Tibial artery (tissue), 4 donors: ENCODE measurements at regions of chr5 and their contacts with region 1.

Region 1: GRCh38 chr5:14644623-14645237 is 19.8 kb upstream of the OTULIN start:
- DNase-seq: no peak
- H3K4me3 ChIP-seq: no peak overlapping the region
- H3K27ac ChIP-seq: no peak overlapping the region
- H3K4me1 ChIP-seq: no peaks in the 10 kb centered on the region
- H3K27me3 ChIP-seq: peaks cover 0 to 22% of the 10 kb centered on the region in 2 donors
- CTCF ChIP-seq: no peak

Region 2: GRCh38 chr5:13987843-13988464 is 656.8 kb before region 1 on chr5:
- intact Hi-C with region 1: loop called (anchors 10 kb)
- DNase-seq: peak in 1 of 2 donors; percentile 43
- H3K4me3 ChIP-seq: no peak overlapping the region
- H3K27ac ChIP-seq: no peak overlapping the region
- H3K4me1 ChIP-seq: peaks cover 0 to 10% (median 0%) of the 10 kb centered on the region in 4 donors
- H3K27me3 ChIP-seq: peaks cover 0 to 3% of the 10 kb centered on the region in 2 donors
- CTCF ChIP-seq: peak; percentile 77 to 82

Region 3: GRCh38 chr5:14351845-14352712 is 292.7 kb before region 1 on chr5:
- intact Hi-C with region 1: loop called (anchors 5 kb)
- DNase-seq: peak; percentile 58 to 81
- H3K4me3 ChIP-seq: no peak overlapping the region
- H3K27ac ChIP-seq: no peak overlapping the region
- H3K4me1 ChIP-seq: peaks cover 0 to 25% (median 5%) of the 10 kb centered on the region in 4 donors
- H3K27me3 ChIP-seq: no peaks in the 10 kb centered on the region
- CTCF ChIP-seq: peak; percentile 85 to 95

Region 4: GRCh38 chr5:14405267-14405666 is 239.5 kb before region 1 on chr5:
- intact Hi-C with region 1: loop called (anchors 10 kb)
- DNase-seq: no peak
- H3K4me3 ChIP-seq: no peak overlapping the region
- H3K27ac ChIP-seq: no peak overlapping the region
- H3K4me1 ChIP-seq: peaks cover 0 to under 1% (median 0%) of the 10 kb centered on the region in 4 donors
- H3K27me3 ChIP-seq: no peaks in the 10 kb centered on the region
- CTCF ChIP-seq: no peak

Region 5: GRCh38 chr5:14871210-14872069 is 226.7 kb after region 1 on chr5 and contains the start of gene ANKH:
- intact Hi-C with region 1: no loop called
- DNase-seq: peak; percentile 69 to 89
- H3K4me3 ChIP-seq: peak within 1 kb of the TSS; percentile 78 to 99
- H3K27ac ChIP-seq: peak within 1 kb of the TSS; percentile 96 to 98
- H3K4me1 ChIP-seq: peaks cover 0 to 27% (median 10%) of the 10 kb centered on the region in 4 donors
- H3K27me3 ChIP-seq: no peaks in the 10 kb centered on the region
- CTCF ChIP-seq: peak in 1 of 2 experiments; percentile 57

Region 6: DNA sequence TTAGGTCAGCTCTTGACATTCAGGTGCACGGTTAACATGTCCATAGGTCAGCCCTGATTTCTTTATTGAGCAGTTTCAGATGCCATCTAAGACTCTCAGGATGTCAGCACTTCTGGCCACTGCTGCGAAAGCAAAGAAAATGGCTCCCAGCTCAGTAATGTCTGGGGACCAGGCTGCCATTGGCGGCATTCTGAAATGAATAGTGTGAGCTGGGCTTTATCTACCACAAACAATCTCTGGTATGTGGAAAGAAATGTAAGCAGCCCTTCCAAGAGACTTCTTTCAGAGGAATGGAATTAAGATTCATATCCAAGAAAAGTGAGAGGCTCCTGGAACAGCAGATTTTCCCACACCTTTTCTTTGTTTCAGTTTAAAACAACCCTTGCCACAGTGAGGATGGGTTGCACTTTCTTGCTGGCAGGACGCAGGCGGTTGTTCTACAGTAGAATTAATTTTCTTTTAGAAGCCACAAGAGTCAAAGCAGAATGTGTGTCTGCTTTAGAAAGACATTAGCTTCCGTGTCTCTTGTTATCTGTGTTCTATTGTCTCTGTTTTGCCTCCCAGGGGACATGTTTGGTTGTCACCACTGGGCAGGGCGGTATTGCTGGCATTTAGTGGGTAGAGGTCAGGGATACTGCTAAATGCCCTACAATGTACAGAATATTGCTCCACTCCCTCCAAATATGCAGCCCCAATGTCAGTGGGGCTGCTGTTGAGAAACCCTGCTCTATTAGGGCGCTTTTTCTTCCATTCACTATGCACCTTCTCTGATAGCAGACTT is 376.7 kb after region 1 on chr5:
- intact Hi-C with region 1: no loop called
- DNase-seq: no peak
- H3K4me3 ChIP-seq: peak overlapping the region; percentile 26 to 30
- H3K27ac ChIP-seq: peak overlapping the region; percentile 54 to 67
- H3K4me1 ChIP-seq: peaks cover 0 to 43% (median 9%) of the 10 kb centered on the region in 4 donors
- H3K27me3 ChIP-seq: no peaks in the 10 kb centered on the region
- CTCF ChIP-seq: no peak

Region 7: GRCh38 chr5:15785531-15785981 is 1140.8 kb after region 1 on chr5:
- intact Hi-C with region 1: no loop called
- DNase-seq: no peak
- H3K4me3 ChIP-seq: no peak overlapping the region
- H3K27ac ChIP-seq: no peak overlapping the region
- H3K4me1 ChIP-seq: peaks cover 0 to 12% (median 0%) of the 10 kb centered on the region in 4 donors
- H3K27me3 ChIP-seq: no peaks in the 10 kb centered on the region
- CTCF ChIP-seq: no peak